ENCODE measurements at regions of chr15 and their contacts with region 1.

Region 1: DNA sequence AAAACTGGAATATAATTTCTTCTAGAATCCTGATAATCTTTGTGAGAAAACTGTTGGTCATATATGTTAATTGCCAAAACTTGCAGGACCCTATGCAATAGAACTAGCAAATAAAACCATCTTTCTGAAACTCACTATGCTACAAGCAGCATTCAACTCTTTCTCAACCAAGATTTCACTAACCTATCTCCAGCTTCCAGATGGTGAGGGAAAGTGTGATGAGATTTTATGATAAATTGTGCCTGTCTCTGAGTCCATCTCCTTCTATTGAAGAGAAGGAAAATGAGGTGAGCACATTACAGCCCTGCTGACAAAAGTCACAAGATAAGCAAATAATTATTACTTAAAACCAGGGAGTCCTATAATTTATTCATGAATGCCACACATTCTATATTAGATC is 44.1 kb upstream of the UBE2Q2 start:
- DNase-seq: no peak
- ATAC-seq: no peak
- H3K4me3 ChIP-seq: no peak overlapping the region
- H3K27ac ChIP-seq: no peak overlapping the region
- H3K4me1 ChIP-seq: peaks cover 4% of the 10 kb centered on the region
- H3K27me3 ChIP-seq: no peaks in the 10 kb centered on the region
- CTCF ChIP-seq: no peak
- POLR2A ChIP-seq: no peak

Region 2: GRCh38 chr15:75727851-75728715 is 71.1 kb before region 1 on chr15:
- intact Hi-C with region 1: loop called (anchors 5 kb)
- DNase-seq: peak; percentile 65 to 80 (median 70)
- ATAC-seq: peak; percentile 41
- H3K4me3 ChIP-seq: no peak overlapping the region
- H3K27ac ChIP-seq: no peak overlapping the region
- H3K4me1 ChIP-seq: peaks cover 12% of the 10 kb centered on the region
- H3K27me3 ChIP-seq: no peaks in the 10 kb centered on the region
- CTCF ChIP-seq: peak in 6 of 7 experiments; percentile 39 to 64 (median 52)
- POLR2A ChIP-seq: no peak

Region 3: GRCh38 chr15:75861750-75862402 is 62.7 kb after region 1 on chr15:
- intact Hi-C with region 1: no loop called
- DNase-seq: no peak
- ATAC-seq: no peak
- H3K4me3 ChIP-seq: no peak overlapping the region
- H3K27ac ChIP-seq: no peak overlapping the region
- H3K4me1 ChIP-seq: no peaks in the 10 kb centered on the region
- H3K27me3 ChIP-seq: no peaks in the 10 kb centered on the region
- CTCF ChIP-seq: no peak
- POLR2A ChIP-seq: no peak

Region 4: DNA sequence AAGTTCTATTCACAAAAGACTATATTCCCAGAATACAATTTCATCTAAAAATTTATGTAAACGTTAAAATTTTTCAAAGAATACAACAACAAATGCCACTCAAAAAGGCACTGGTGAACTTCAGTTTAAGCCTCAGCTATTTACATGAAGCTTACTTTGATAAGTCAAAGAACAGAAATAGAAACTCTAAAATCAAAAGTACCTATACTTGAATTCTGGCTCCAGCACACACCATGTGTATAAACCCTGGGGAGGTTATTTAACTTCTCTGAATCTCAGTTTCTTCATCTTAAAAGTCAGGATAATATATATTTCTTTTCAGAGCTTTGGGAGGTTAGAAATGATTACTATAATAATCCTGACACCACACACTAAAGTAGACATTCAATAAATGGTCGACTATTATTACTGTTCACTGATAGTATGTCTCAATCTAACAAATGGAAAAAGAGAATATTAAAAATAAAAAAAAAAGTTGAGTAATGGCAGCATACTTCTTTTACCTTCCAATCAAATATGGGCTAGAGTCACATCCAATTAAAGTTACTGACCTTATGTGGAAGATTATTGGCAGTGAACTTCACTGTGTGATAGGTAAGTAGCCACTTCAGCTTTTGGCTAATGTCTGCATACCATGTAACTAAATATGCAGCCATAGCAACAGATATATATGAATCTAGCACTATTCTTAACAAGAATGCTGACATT is 785.8 kb after region 1 on chr15:
- intact Hi-C with region 1: no loop called
- DNase-seq: no peak
- ATAC-seq: no peak
- H3K4me3 ChIP-seq: no peak overlapping the region
- H3K27ac ChIP-seq: no peak overlapping the region
- H3K4me1 ChIP-seq: no peaks in the 10 kb centered on the region
- H3K27me3 ChIP-seq: no peaks in the 10 kb centered on the region
- CTCF ChIP-seq: no peak
- POLR2A ChIP-seq: no peak

Measured in body of pancreas (tissue), 4 donors.